Esophagus muscularis mucosa (tissue), 4 donors: ENCODE measurements at regions of chr19 and their contacts with region 1.

Region 1: GRCh38 chr19:32224371-32225244 is 120.8 kb upstream of the ZNF507 start:
- DNase-seq: no peak
- H3K4me3 ChIP-seq: peak overlapping the region; percentile 8 to 41 (median 29)
- H3K27ac ChIP-seq: no peak overlapping the region
- H3K4me1 ChIP-seq: peaks cover 4 to 10% (median 7%) of the 10 kb centered on the region in 4 donors
- H3K27me3 ChIP-seq: peaks cover 0 to 55% (median 8%) of the 10 kb centered on the region in 4 donors
- CTCF ChIP-seq: peak in 2 of 3 experiments; percentile 97 to 99
- EP300 ChIP-seq: no peak
- POLR2A ChIP-seq: no peak

Region 2: GRCh38 chr19:30666301-30666803 is 1558.3 kb before region 1 on chr19:
- intact Hi-C with region 1: loop called (anchors 2 kb)
- DNase-seq: no peak
- H3K4me3 ChIP-seq: no peak overlapping the region
- H3K27ac ChIP-seq: no peak overlapping the region
- H3K4me1 ChIP-seq: peaks cover 2 to 37% (median 30%) of the 10 kb centered on the region in 4 donors
- H3K27me3 ChIP-seq: peaks cover 0 to 39% (median 6%) of the 10 kb centered on the region in 4 donors
- CTCF ChIP-seq: peak; percentile 71 to 95 (median 84)
- EP300 ChIP-seq: no peak
- POLR2A ChIP-seq: no peak

Region 3: GRCh38 chr19:30784850-30785457 is 1439.7 kb before region 1 on chr19:
- intact Hi-C with region 1: loop called (anchors 5 kb)
- DNase-seq: peak; percentile 89
- H3K4me3 ChIP-seq: no peak overlapping the region
- H3K27ac ChIP-seq: no peak overlapping the region
- H3K4me1 ChIP-seq: no peaks in the 10 kb centered on the region
- H3K27me3 ChIP-seq: peaks cover 0 to 12% (median 0%) of the 10 kb centered on the region in 4 donors
- CTCF ChIP-seq: peak; percentile 41 to 67 (median 48)
- EP300 ChIP-seq: no peak
- POLR2A ChIP-seq: no peak